ENCODE measurements at regions of chr7 and their contacts with region 1.

Region 1: DNA sequence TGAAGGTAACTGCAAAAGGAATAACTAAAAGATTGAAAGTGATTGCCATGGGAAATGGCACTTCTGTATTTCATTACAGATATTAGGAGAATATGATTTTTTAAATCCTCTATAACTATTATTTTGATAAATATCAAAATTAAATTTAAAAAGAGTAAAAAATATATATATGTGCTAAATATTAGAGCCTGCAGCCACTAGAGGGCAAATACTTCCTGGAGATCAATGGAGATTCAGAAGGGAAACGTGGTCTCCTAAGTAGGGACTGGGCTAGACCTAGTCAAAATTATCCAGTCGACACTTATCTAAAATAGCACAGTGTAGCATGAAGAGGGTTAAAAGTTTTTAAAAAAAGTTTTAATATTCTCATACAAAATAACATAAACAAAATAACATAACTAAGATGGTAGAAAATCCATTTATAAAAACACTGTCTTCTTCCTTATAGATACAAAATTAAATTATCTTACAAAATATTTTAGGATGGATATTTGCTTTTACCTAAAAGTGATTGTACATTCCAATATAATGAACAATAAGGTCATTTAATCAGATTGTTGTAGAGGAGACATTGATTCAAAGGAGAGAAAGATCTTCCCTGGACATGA is 434.3 kb downstream of the MDFIC start:
- H3K4me3 Mint-ChIP-seq: no peak overlapping the region
- H3K27ac Mint-ChIP-seq: no peak overlapping the region
- H3K4me1 Mint-ChIP-seq: no peaks in the 10 kb centered on the region
- H3K27me3 Mint-ChIP-seq: no peaks in the 10 kb centered on the region

Region 2: DNA sequence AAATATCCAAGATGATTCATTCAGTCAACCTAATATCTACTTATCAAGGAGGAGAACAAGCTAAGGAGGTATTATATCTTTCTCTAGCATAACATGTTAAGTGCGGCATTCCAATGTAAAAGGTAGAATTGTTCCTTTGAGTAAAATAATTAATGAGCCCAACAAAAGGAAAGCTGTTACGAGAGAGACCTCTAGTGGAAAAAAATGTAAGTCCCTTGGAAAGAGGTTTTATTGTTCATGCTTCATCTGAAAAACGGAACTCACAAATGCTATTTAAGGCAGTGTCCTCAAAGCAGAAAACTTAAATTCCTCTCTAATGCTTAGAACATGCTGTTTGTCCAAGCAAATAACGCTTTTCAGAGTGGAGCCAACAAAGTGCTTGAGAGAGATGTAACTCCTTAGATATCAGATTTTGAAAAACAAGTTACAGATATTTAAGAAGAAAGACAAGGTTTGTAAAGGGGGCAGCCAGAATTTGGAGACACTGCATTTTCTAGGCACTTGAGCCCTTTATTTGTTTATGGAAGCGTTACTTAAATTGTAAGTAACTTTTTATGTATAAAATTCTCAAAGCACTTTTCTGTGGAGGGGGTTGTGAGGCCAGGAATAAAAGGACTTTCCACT is 554.4 kb after region 1 on chr7:
- intact Hi-C with region 1: loop called (anchors 5 kb)
- H3K4me3 Mint-ChIP-seq: no peak overlapping the region
- H3K27ac Mint-ChIP-seq: no peak overlapping the region
- H3K4me1 Mint-ChIP-seq: no peaks in the 10 kb centered on the region
- H3K27me3 Mint-ChIP-seq: peaks cover 2% of the 10 kb centered on the region